K562 (cell line): ENCODE measurements at regions of chr5 and their contacts with region 1.

Region 1: DNA sequence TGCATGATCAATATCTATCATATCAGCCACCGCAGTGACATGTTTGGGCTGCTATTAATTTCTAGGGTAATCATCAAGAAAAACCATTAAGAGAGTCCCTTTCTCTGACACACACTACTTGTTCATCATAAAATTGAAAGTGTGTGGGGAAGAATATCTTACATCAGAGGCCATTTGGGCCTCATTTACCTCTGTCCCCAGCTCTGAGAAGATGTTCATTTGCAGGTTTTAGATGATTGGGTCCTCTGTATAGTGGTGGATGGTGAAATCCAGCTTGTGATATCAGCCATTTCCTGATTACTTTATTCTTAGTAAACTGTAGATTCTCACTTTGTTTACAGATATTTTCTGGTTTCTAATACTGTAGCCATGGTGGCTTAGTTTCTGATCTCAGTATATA is 29.8 kb upstream of the PJA2 start:
- DNase-seq: no peak
- ATAC-seq: no peak
- H3K4me3 ChIP-seq: no peak overlapping the region
- H3K27ac ChIP-seq: no peak overlapping the region
- H3K4me1 ChIP-seq: no peaks in the 10 kb centered on the region
- H3K27me3 ChIP-seq: no peaks in the 10 kb centered on the region
- CTCF ChIP-seq: no peak
- EP300 ChIP-seq: no peak
- POLR2A ChIP-seq: no peak
- RAD21 ChIP-seq: no peak

Region 2: GRCh38 chr5:109316634-109317033 is 123.0 kb before region 1 on chr5:
- CTCF ChIA-PET with region 1: no interaction called
- POLR2A ChIA-PET with region 1: no interaction called
- in situ Hi-C with region 1: no loop called
- intact Hi-C with region 1: loop called (anchors 5 kb)
- DNase-seq: no peak
- ATAC-seq: no peak
- H3K4me3 ChIP-seq: no peak overlapping the region
- H3K27ac ChIP-seq: no peak overlapping the region
- H3K4me1 ChIP-seq: no peaks in the 10 kb centered on the region
- H3K27me3 ChIP-seq: peaks cover 4 to 9% of the 10 kb centered on the region in 2 experiments; a peak in 2 of 5 replicates
- CTCF ChIP-seq: no peak
- EP300 ChIP-seq: no peak
- POLR2A ChIP-seq: no peak
- RAD21 ChIP-seq: no peak

Region 3: DNA sequence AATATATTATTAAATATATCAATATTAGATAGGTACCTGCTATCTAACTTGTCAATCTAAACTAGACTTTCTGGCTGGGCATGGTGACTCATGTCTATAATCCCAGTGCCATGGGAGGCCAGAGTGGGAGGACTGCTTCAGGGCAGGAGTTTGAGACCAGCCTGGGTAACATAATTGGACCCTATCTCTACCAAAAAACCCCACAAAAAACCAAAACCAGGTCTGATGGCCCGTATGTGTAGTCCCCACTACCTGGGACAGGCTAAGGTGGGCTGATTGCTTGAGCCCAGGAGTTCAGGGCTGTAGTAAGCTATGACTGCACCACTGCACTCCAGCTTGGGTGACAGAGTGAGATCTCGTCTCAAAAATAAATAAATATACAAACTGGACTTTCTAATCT is 84.8 kb before region 1 on chr5:
- CTCF ChIA-PET with region 1: no interaction called
- POLR2A ChIA-PET with region 1: no interaction called
- in situ Hi-C with region 1: no loop called
- intact Hi-C with region 1: loop called (anchors 5 kb)
- DNase-seq: peak in 1 of 4 experiments; percentile 7
- ATAC-seq: no peak; the same call in 2 of the 3 replicates
- H3K4me3 ChIP-seq: no peak overlapping the region
- H3K27ac ChIP-seq: no peak overlapping the region; the same call in 2 of the 3 replicates
- H3K4me1 ChIP-seq: no peaks in the 10 kb centered on the region
- H3K27me3 ChIP-seq: no peaks in the 10 kb centered on the region
- CTCF ChIP-seq: no peak
- EP300 ChIP-seq: no peak
- POLR2A ChIP-seq: no peak
- RAD21 ChIP-seq: no peak

Region 4: GRCh38 chr5:110086658-110087388 is 647.2 kb after region 1 on chr5:
- CTCF ChIA-PET with region 1: no interaction called
- POLR2A ChIA-PET with region 1: no interaction called
- in situ Hi-C with region 1: no loop called
- intact Hi-C with region 1: no loop called
- DNase-seq: no peak
- ATAC-seq: no peak
- H3K4me3 ChIP-seq: no peak overlapping the region
- H3K27ac ChIP-seq: no peak overlapping the region
- H3K4me1 ChIP-seq: no peaks in the 10 kb centered on the region
- H3K27me3 ChIP-seq: no peaks in the 10 kb centered on the region
- CTCF ChIP-seq: no peak
- EP300 ChIP-seq: no peak
- POLR2A ChIP-seq: no peak
- RAD21 ChIP-seq: no peak